ENCODE measurements at regions of chr7 and their contacts with region 1.

Region 1: GRCh38 chr7:148962823-148963582 is 65.3 kb downstream of the PDIA4 start:
- DNase-seq: peak; percentile 81
- ATAC-seq: peak; percentile 58
- H3K4me3 Mint-ChIP-seq: peak overlapping the region; percentile 87
- H3K27ac Mint-ChIP-seq: peak overlapping the region; percentile 93
- H3K4me1 Mint-ChIP-seq: peaks cover 28% of the 10 kb centered on the region
- H3K27me3 Mint-ChIP-seq: no peaks in the 10 kb centered on the region

Region 2: GRCh38 chr7:148503875-148504487 is 459.0 kb before region 1 on chr7:
- CTCF ChIA-PET with region 1: interaction called, 23 read pairs
- POLR2A ChIA-PET with region 1: no interaction called
- intact Hi-C with region 1: loop called (anchors 1 kb)
- DNase-seq: no peak
- ATAC-seq: no peak
- H3K4me3 Mint-ChIP-seq: no peak overlapping the region
- H3K27ac Mint-ChIP-seq: no peak overlapping the region
- H3K4me1 Mint-ChIP-seq: peaks cover 36% of the 10 kb centered on the region
- H3K27me3 Mint-ChIP-seq: peaks cover 24% of the 10 kb centered on the region

Region 3: DNA sequence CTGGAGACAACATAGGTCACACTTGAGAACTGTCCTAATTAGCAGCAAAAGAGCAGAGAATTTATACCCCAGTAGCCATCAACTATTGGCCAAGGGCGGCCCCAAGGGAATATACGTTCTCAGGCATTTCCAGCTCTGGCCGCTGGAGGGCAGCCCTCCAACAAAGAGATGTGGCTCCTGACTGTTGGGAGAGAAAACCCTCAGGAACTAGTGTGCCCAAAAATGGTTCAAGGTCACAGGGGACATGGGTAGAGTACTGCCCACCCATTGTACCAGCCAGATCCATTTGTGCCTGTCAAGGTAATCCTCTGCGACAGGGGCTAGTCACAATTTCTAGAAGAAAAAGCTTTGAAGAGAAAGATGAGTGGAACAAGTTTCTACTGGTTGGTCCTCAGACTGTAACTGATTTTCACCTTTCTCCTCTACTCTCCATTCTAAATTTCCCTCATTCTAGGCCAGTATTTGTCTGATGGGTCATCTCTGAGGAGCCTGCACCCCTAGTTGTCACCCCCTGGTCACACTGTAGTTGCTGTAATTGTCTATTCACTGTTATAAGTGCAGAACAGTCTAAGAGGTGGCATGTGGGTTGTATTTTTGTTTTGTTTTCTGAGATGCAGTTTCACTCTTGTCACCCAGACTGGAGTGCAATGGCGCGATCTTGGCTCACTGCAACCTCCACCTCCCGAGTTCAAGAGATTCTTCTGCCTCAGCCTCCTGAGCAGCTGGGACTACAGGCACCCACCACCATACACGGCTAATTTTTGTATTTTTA is 387.2 kb before region 1 on chr7:
- CTCF ChIA-PET with region 1: interaction called, 13 read pairs
- POLR2A ChIA-PET with region 1: no interaction called
- intact Hi-C with region 1: loop called (anchors 1 kb)
- DNase-seq: peak; percentile 82
- ATAC-seq: peak; percentile 86
- H3K4me3 Mint-ChIP-seq: no peak overlapping the region
- H3K27ac Mint-ChIP-seq: no peak overlapping the region
- H3K4me1 Mint-ChIP-seq: peaks cover 13% of the 10 kb centered on the region
- H3K27me3 Mint-ChIP-seq: peaks cover 7% of the 10 kb centered on the region

Region 4: DNA sequence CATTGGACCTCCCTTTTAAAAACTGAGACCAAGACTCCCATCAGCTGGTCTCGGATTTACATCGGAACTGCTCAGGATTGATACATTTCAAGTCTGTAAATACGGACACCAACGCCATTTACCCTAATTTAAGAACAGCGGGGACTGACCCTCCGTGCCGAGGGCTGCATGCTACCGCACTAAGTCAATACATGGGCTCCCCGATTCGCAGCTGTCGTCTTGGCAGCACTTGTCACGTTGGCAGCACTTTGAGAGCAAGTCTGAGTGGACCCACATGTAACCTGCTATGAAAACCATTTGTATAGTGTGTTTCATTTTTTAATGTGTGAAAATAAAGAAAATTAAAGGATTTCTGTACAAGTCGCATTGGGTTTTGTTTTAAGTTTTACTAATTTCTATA is 162.3 kb before region 1 on chr7:
- CTCF ChIA-PET with region 1: interaction called, 4 read pairs
- POLR2A ChIA-PET with region 1: no interaction called
- intact Hi-C with region 1: loop called (anchors 1 to 2 kb)
- DNase-seq: no peak
- ATAC-seq: no peak
- H3K4me3 Mint-ChIP-seq: no peak overlapping the region
- H3K27ac Mint-ChIP-seq: no peak overlapping the region
- H3K4me1 Mint-ChIP-seq: no peaks in the 10 kb centered on the region
- H3K27me3 Mint-ChIP-seq: no peaks in the 10 kb centered on the region

Region 5: GRCh38 chr7:148884299-148885022 is 78.5 kb before region 1 on chr7:
- CTCF ChIA-PET with region 1: interaction called, 8 read pairs
- POLR2A ChIA-PET with region 1: interaction called, 3 read pairs
- intact Hi-C with region 1: loop called (anchors 1 to 5 kb)
- DNase-seq: peak; percentile 97
- ATAC-seq: peak; percentile 92
- H3K4me3 Mint-ChIP-seq: peak overlapping the region; percentile 95
- H3K27ac Mint-ChIP-seq: peak overlapping the region; percentile 99
- H3K4me1 Mint-ChIP-seq: peaks cover 34% of the 10 kb centered on the region
- H3K27me3 Mint-ChIP-seq: no peaks in the 10 kb centered on the region

Region 6: DNA sequence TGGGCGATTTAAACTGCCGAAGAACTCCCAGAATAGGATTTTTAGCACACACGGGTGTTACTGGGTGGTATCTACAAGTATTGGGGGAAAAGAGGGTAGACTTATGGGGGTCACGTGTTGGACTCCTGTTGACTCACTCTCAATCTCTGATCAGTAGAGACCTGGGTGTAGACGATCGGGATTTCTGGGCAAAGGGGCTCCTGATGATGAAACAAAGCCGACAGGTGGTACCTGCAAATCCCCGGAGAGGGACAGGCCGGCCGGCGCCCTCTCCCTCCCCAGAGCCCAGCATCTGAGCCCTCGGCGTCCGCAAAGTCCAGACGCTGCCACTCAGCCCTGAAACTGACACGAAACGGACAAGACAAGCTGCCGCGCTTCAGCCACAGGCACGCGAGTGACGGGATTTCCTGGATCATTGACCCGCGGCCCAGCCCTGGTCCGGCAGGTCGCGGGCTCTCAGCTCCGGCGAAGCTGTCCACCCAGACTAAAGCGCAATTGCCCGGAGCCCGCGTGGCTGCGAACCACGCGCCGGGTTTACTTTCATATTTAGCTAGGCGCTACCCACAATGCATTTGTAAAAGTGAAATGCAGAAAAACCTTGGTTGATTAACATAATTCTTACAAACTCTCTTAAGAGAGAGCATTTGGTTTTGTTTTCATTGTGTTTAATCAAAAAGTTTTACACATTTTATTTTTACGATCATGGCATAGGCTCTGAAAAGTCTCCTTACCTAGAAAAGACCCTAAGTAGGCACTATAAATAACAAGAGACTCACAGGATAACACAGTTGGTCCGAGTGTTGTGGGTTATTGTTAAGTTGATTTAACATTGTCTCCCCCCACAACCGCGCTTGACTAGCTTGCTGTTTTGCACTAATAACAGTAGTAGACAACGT is 22.1 kb before region 1 on chr7:
- CTCF ChIA-PET with region 1: interaction called, 10 read pairs
- POLR2A ChIA-PET with region 1: no interaction called
- intact Hi-C with region 1: loop called in 1 of 2 experiments (anchors 1 kb)
- DNase-seq: peak; percentile 78
- ATAC-seq: peak; percentile 68
- H3K4me3 Mint-ChIP-seq: peak overlapping the region; percentile 98
- H3K27ac Mint-ChIP-seq: peak overlapping the region; percentile 100
- H3K4me1 Mint-ChIP-seq: peaks cover 16% of the 10 kb centered on the region
- H3K27me3 Mint-ChIP-seq: no peaks in the 10 kb centered on the region

Region 7: GRCh38 chr7:148997497-148997896 is 34.5 kb after region 1 on chr7:
- CTCF ChIA-PET with region 1: no interaction called
- POLR2A ChIA-PET with region 1: no interaction called
- intact Hi-C with region 1: no loop called
- DNase-seq: no peak
- ATAC-seq: no peak
- H3K4me3 Mint-ChIP-seq: no peak overlapping the region
- H3K27ac Mint-ChIP-seq: no peak overlapping the region
- H3K4me1 Mint-ChIP-seq: no peaks in the 10 kb centered on the region
- H3K27me3 Mint-ChIP-seq: no peaks in the 10 kb centered on the region

Region 8: GRCh38 chr7:149090397-149091195 is 127.6 kb after region 1 on chr7 and contains the start of gene ZNF786:
- CTCF ChIA-PET with region 1: no interaction called
- POLR2A ChIA-PET with region 1: no interaction called
- intact Hi-C with region 1: loop called in 1 of 2 experiments (anchors 1 kb)
- DNase-seq: peak; percentile 97
- ATAC-seq: peak; percentile 87
- H3K4me3 Mint-ChIP-seq: peak within 1 kb of the TSS; percentile 89
- H3K27ac Mint-ChIP-seq: peak within 1 kb of the TSS; percentile 100
- H3K4me1 Mint-ChIP-seq: peaks cover 19% of the 10 kb centered on the region
- H3K27me3 Mint-ChIP-seq: no peaks in the 10 kb centered on the region
- total RNA-seq, gene ZNF786: 4.4 to 4.8 TPM